PC-3 (cell line): ENCODE measurements at regions of chr12 and their contacts with region 1.

Region 1: DNA sequence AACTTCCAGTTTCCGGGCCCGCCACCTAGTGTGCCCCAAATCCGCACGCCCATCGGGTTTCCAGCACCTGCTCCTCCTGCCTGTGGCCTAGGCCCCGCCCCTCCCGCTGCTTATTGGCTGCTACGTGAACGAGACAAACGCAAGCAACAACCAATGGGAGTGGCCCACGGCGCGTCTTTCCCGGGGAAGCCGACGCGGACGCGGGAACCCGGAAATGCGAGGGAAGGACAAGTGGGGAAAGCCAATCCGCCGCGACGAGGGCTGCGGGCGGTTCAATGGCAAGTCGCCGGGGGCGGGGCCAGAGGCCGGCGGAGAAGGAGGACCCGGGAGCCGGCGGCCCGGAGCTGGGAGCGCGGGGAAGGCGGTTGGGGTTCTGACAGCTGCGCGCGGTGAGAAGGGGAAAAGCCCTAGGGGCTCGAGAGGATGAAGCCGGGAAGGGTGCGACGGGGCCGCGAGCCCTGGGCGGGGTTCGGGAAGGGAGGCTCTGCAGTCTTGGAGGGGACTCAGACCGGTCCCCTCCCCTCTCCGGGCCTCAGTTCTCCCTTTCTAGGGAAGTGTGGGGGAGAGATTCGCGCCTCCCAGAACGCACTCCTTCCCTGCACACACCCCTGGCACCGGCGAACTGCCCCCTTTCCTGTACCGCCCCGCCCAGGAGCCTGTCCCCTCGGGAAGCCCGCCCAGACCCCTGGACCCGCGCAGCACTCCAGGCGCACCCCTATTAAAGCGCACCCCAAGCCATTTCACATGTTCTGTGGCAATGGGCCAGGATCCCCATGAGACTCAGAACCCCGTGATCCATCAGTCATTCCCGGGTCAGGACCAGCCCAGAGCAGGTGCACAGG is at the start of gene FICD:
- DNase-seq: peak; percentile 99
- ATAC-seq: peak; percentile 88
- H3K4me3 ChIP-seq: peak within 1 kb of the TSS; percentile 90
- H3K27ac ChIP-seq: no peak within 1 kb of the TSS
- H3K4me1 ChIP-seq: peaks cover 11% of the 10 kb centered on the region; the same call in 1 of the 2 replicates
- H3K27me3 ChIP-seq: no peaks in the 10 kb centered on the region
- CTCF ChIP-seq: no peak
- total RNA-seq, gene FICD: 6.4 and 18.5 TPM in 2 replicates

Region 2: GRCh38 chr12:107685360-107686248 is 829.6 kb before region 1 on chr12 and contains the start of gene PWP1:
- CTCF ChIA-PET with region 1: no interaction called
- POLR2A ChIA-PET with region 1: no interaction called
- intact Hi-C with region 1: loop called (anchors 10 kb)
- DNase-seq: peak; percentile 98
- ATAC-seq: peak; percentile 83
- H3K4me3 ChIP-seq: peak within 1 kb of the TSS; percentile 92
- H3K27ac ChIP-seq: peak within 1 kb of the TSS; percentile 66
- H3K4me1 ChIP-seq: peaks cover 24% of the 10 kb centered on the region
- H3K27me3 ChIP-seq: no peaks in the 10 kb centered on the region
- CTCF ChIP-seq: no peak
- total RNA-seq, gene PWP1: 85.8 and 189 TPM in 2 replicates

Region 3: DNA sequence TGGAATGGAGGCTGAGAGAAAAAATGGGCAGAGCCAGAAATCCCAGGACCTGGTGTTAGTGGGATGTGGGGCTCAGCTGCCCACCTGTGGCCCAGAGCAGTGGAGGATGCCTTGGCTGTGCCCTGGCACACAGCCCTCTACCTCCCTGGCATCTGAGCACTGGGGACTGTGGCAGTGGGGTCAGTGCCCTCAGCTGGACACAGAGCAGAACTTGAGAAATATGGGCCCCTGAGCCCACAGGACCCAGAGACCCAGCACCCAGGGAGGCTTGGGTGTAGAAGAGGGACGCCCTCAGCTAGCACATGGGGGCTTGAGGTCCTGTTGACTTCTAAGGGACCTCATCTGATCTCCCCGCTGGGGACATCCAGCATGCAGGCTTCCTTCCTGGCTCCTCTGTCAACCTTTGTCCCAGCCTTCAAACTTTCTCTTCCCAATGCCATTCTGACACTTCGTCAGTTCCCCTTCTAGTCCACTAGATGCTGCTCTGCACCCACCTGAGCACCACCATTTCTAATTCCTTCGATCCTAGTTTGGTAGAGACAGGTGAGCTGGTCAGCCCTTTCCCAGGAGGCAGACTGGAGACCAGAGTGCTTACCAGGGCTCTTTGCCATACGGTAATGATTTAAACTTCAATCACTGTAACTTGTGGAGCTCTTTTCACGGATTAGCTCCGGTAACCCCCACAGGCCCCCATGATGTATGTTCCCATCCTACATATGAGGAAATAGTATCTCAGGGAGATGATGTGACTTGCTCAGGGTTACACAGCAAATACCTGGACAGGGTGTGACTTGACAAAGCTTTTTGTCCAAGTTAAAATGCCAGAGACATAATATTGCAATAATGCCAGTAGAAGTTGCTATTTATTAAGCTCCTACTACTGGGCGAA is 597.0 kb before region 1 on chr12:
- CTCF ChIA-PET with region 1: interaction called, 5 read pairs
- POLR2A ChIA-PET with region 1: no interaction called
- intact Hi-C with region 1: loop called (anchors 1 kb)
- DNase-seq: peak; percentile 67
- ATAC-seq: peak; percentile 85
- H3K4me3 ChIP-seq: no peak overlapping the region
- H3K27ac ChIP-seq: no peak overlapping the region
- H3K4me1 ChIP-seq: no peaks in the 10 kb centered on the region
- H3K27me3 ChIP-seq: peaks cover 24% of the 10 kb centered on the region
- CTCF ChIP-seq: peak; percentile 84

Region 4: GRCh38 chr12:108063192-108063591 is 452.0 kb before region 1 on chr12:
- CTCF ChIA-PET with region 1: no interaction called
- POLR2A ChIA-PET with region 1: no interaction called
- intact Hi-C with region 1: loop called (anchors 5 kb)
- DNase-seq: peak; percentile 63
- ATAC-seq: no peak
- H3K4me3 ChIP-seq: no peak overlapping the region
- H3K27ac ChIP-seq: no peak overlapping the region
- H3K4me1 ChIP-seq: no peaks in the 10 kb centered on the region
- H3K27me3 ChIP-seq: peaks cover 40% of the 10 kb centered on the region
- CTCF ChIP-seq: peak; percentile 73

Region 5: DNA sequence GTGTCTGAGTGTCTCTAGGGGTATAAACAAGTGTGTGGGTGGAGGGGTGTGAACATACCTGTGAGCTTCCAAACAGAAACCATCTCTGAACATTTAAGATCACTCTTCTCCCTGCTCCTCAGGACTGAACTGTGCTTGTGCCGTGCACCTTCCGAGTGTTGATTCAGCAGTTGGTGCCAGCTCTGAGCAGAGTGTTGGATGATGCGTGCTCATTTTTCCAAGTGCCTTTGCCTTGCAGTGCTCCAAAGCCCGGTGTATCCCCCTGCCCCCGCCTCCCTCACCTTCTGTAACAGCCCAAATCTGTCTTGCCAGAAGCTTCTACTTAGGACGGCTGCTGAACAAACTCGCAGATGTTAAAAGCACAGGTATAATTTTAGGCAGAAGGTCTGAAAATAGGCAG is 381.7 kb before region 1 on chr12:
- CTCF ChIA-PET with region 1: no interaction called
- POLR2A ChIA-PET with region 1: no interaction called
- intact Hi-C with region 1: no loop called
- DNase-seq: no peak
- ATAC-seq: no peak
- H3K4me3 ChIP-seq: no peak overlapping the region
- H3K27ac ChIP-seq: no peak overlapping the region
- H3K4me1 ChIP-seq: no peaks in the 10 kb centered on the region
- H3K27me3 ChIP-seq: peaks cover 93% of the 10 kb centered on the region
- CTCF ChIP-seq: no peak

Region 6: GRCh38 chr12:108482717-108483212 is 32.4 kb before region 1 on chr12:
- CTCF ChIA-PET with region 1: interaction called, 3 read pairs
- POLR2A ChIA-PET with region 1: interaction called, 4 read pairs
- intact Hi-C with region 1: loop called (anchors 2 kb)
- DNase-seq: peak; percentile 91
- ATAC-seq: peak; percentile 77
- H3K4me3 ChIP-seq: peak overlapping the region; percentile 37; the same call in 1 of the 2 replicates
- H3K27ac ChIP-seq: peak overlapping the region; percentile 96
- H3K4me1 ChIP-seq: peaks cover 55% of the 10 kb centered on the region
- H3K27me3 ChIP-seq: no peaks in the 10 kb centered on the region
- CTCF ChIP-seq: no peak

Region 7: GRCh38 chr12:109092497-109093021 is 577.4 kb after region 1 on chr12:
- CTCF ChIA-PET with region 1: no interaction called
- POLR2A ChIA-PET with region 1: no interaction called
- intact Hi-C with region 1: no loop called
- DNase-seq: no peak
- ATAC-seq: no peak
- H3K4me3 ChIP-seq: peak overlapping the region; percentile 62
- H3K27ac ChIP-seq: peak overlapping the region; percentile 27; the same call in 1 of the 2 replicates
- H3K4me1 ChIP-seq: peaks cover 40% of the 10 kb centered on the region
- H3K27me3 ChIP-seq: no peaks in the 10 kb centered on the region
- CTCF ChIP-seq: no peak